IMR-90 (cell line): ENCODE measurements at regions of chr2 and their contacts with region 1.

Region 1: DNA sequence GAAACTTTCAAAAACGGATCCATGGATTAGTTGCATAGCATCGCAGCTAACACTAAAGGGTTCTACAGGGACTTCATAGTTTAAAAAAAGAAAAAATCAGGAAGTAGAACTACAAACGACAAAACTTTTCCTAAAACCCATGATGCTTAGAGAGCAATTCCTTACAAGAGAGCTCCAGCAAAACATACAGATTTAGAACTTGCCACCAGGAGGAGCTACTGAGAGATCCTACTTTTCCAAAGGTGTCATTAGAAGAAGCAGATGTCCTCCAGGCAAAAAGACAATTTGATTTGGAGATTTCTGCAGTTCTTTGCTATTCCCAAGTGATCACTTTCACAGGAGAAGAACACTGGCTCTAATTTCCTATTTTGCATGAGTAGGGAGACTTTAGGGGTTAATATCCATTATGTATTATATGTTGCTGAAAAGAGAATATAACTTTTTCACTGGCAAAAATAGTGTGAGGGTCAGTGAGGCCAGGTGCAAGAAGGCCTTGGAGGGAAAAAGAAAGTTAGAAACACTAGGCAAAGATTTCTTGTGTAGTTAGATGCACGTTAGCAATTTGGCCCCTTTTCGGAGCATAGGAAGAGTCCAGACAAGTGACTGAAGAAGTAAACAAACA is 436.2 kb downstream of the SUCLG1 start:
- DNase-seq: peak; percentile 60
- ATAC-seq: peak; percentile 77
- H3K4me3 ChIP-seq: no peak overlapping the region
- H3K27ac ChIP-seq: no peak overlapping the region
- H3K4me1 ChIP-seq: no peaks in the 10 kb centered on the region
- H3K27me3 ChIP-seq: no peaks in the 10 kb centered on the region
- CTCF ChIP-seq: peak; percentile 62
- POLR2A ChIP-seq: no peak
- RAD21 ChIP-seq: peak; percentile 54

Region 2: DNA sequence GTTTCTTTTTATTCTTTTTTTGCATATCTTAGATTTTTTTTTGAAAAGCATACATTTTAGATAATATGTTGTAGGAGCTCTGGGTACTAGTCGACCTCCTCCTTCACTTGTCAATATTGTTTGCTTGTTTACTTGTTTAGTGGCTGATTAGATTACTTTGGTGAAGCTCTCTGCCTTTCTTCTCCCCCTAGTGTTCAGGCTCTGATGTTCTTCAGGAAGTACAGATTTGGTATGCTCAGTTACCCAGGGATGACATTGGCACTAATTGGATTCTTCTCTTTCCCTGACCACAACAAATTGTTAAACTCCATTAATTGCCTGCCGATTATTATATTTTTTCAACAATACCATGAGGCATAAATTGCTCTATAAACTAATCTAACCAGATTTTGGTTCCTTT is 55.1 kb before region 1 on chr2:
- CTCF ChIA-PET with region 1: no interaction called
- POLR2A ChIA-PET with region 1: no interaction called
- dilution Hi-C with region 1: no loop called
- in situ Hi-C with region 1: no loop called
- intact Hi-C with region 1: no loop called
- DNase-seq: no peak
- ATAC-seq: no peak
- H3K4me3 ChIP-seq: no peak overlapping the region
- H3K27ac ChIP-seq: no peak overlapping the region
- H3K4me1 ChIP-seq: no peaks in the 10 kb centered on the region
- H3K27me3 ChIP-seq: no peaks in the 10 kb centered on the region
- CTCF ChIP-seq: no peak
- POLR2A ChIP-seq: no peak
- RAD21 ChIP-seq: no peak

Region 3: DNA sequence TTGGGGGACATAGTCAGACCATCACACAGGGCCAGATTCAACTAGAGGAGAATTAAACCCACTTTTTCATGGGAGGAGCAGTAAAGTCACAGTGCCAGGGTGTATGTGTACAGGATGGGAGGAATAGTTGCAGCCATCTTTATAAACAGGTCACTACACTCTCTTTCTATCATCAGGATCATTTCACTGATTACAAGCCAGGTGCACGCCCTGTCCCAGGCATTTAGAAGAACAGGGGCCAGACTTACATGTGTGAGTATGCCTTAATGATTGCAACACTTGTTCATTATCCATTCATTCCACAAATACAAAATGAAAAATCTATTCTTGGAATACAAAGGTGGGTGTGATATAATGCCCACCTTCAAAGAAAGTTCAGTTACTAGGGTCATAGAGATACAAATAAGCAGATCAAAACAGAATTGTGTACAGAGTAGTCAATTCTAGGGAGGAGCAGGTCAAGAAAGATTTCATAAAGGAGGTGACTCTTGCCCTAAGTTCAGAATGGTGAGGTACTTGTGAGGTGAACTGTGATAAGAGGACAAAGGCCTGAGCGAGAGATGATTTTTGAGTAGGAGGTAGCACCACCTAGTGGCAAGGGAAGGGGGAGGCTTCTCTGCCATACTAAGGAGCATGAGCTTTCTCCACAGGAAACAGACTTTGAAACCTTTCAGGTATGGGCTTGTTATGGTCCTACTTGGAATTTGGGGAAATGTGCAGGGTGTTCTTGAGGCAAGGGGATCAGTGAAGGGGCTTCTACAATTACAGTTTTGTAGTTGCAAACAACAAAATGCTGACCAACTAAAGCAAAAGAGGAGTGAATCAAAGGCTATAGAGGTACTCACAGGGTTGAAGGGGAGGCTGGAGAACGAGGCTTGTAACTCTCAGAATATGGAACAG is 279.8 kb after region 1 on chr2:
- CTCF ChIA-PET with region 1: interaction called, 3 read pairs
- POLR2A ChIA-PET with region 1: no interaction called
- dilution Hi-C with region 1: no loop called
- in situ Hi-C with region 1: no loop called
- intact Hi-C with region 1: loop called (anchors 1 kb)
- DNase-seq: peak; percentile 43
- ATAC-seq: peak; percentile 93
- H3K4me3 ChIP-seq: no peak overlapping the region
- H3K27ac ChIP-seq: no peak overlapping the region
- H3K4me1 ChIP-seq: no peaks in the 10 kb centered on the region
- H3K27me3 ChIP-seq: peaks cover 2% of the 10 kb centered on the region; the same call in 1 of the 2 replicates
- CTCF ChIP-seq: peak; percentile 68
- POLR2A ChIP-seq: no peak
- RAD21 ChIP-seq: peak; percentile 66

Region 4: DNA sequence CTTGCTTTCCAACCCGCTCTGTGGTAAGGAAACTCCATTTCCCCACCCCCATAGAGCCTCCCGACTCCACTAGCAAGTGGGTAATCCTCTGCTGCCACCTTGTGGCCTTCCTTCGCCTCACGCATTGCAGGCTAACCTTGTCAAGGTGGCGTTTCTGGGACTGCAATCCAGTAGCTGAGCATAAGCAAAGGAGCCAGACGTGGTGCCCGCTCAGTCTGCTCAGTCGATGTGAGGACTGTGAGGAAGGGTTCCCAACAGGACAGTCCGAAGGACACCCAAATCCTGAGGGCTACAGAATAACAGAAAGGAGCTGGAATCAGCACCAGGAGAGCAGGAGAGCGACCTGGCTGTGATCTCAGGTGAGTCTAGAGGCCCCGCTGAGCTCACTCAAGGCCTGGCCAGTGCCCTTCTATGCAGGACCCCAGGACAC is 292.0 kb after region 1 on chr2:
- CTCF ChIA-PET with region 1: interaction called, 7 read pairs
- POLR2A ChIA-PET with region 1: no interaction called
- dilution Hi-C with region 1: no loop called
- in situ Hi-C with region 1: loop called (anchors 5 kb)
- intact Hi-C with region 1: loop called (anchors 1 kb)
- DNase-seq: peak; percentile 74
- ATAC-seq: peak; percentile 99
- H3K4me3 ChIP-seq: no peak overlapping the region
- H3K27ac ChIP-seq: no peak overlapping the region
- H3K4me1 ChIP-seq: no peaks in the 10 kb centered on the region
- H3K27me3 ChIP-seq: peaks cover 5% of the 10 kb centered on the region; the same call in 1 of the 2 replicates
- CTCF ChIP-seq: peak; percentile 87
- POLR2A ChIP-seq: no peak
- RAD21 ChIP-seq: peak; percentile 87

Region 5: GRCh38 chr2:84424152-84424551 is 401.2 kb after region 1 on chr2:
- CTCF ChIA-PET with region 1: no interaction called
- POLR2A ChIA-PET with region 1: no interaction called
- dilution Hi-C with region 1: no loop called
- in situ Hi-C with region 1: no loop called
- intact Hi-C with region 1: loop called (anchors 1 kb)
- DNase-seq: peak; percentile 33
- ATAC-seq: peak; percentile 64; the same call in 1 of the 2 replicates
- H3K4me3 ChIP-seq: no peak overlapping the region
- H3K27ac ChIP-seq: no peak overlapping the region
- H3K4me1 ChIP-seq: peaks cover 4% of the 10 kb centered on the region
- H3K27me3 ChIP-seq: no peaks in the 10 kb centered on the region
- CTCF ChIP-seq: peak; percentile 66
- POLR2A ChIP-seq: no peak
- RAD21 ChIP-seq: peak; percentile 72

Region 6: GRCh38 chr2:84631047-84631446 is 608.1 kb after region 1 on chr2:
- CTCF ChIA-PET with region 1: no interaction called
- POLR2A ChIA-PET with region 1: no interaction called
- dilution Hi-C with region 1: no loop called
- in situ Hi-C with region 1: no loop called
- intact Hi-C with region 1: loop called (anchors 5 kb)
- DNase-seq: peak; percentile 53
- ATAC-seq: peak; percentile 97
- H3K4me3 ChIP-seq: no peak overlapping the region
- H3K27ac ChIP-seq: no peak overlapping the region
- H3K4me1 ChIP-seq: no peaks in the 10 kb centered on the region
- H3K27me3 ChIP-seq: peaks cover 7% of the 10 kb centered on the region
- CTCF ChIP-seq: peak; percentile 60
- POLR2A ChIP-seq: no peak
- RAD21 ChIP-seq: peak; percentile 74